AG04450 (cell line): ENCODE measurements at regions of chr5 and their contacts with region 1.

Region 1: DNA sequence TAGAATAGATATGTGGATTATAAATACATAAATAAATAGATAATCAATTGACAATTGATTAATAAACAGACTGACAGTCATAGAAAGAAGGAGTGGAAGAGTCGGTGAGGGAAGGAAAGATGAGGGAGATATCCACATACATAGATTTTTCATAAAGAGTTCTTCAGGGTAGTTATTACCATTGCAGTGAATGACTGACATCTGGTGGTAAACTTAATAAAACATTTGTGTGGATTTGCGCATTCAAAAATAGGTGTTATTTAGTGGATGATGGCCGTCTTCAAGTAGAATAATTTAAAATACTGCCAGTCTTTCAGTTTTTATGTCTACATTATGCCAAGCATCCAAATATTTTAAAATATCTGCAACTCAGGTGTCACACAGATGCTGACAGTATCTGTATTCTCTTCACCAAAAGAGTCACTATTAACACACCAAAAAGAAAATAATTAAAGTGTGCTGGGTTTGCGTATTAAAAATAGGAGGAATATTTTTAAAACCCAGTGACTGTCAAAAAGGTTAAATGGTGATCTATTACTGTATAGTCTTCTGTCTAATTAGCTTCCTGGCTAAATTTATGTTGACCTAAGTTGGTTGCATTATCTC is 78.8 kb downstream of the GIN1 start:
- DNase-seq: peak; percentile 10
- H3K4me3 ChIP-seq: no peak overlapping the region
- H3K27ac ChIP-seq: no peak overlapping the region
- H3K27me3 ChIP-seq: no peaks in the 10 kb centered on the region
- CTCF ChIP-seq: peak; percentile 56

Region 2: GRCh38 chr5:102583276-102584124 is 457.7 kb before region 1 on chr5:
- CTCF ChIA-PET with region 1: interaction called, 18 read pairs
- POLR2A ChIA-PET with region 1: no interaction called
- DNase-seq: no peak
- H3K4me3 ChIP-seq: no peak overlapping the region
- H3K27ac ChIP-seq: no peak overlapping the region
- H3K27me3 ChIP-seq: no peaks in the 10 kb centered on the region
- CTCF ChIP-seq: peak; percentile 27; the same call in 1 of the 2 replicates